Aorta (tissue), 5 donors: ENCODE measurements at regions of chr10 and their contacts with region 1.

Region 1: GRCh38 chr10:77391605-77392235 is 245.9 kb downstream of the KCNMA1 start:
- DNase-seq: peak; percentile 91 to 94
- ATAC-seq: peak; percentile 75
- H3K4me3 ChIP-seq: no peak overlapping the region
- H3K27ac ChIP-seq: peak overlapping the region; percentile 94 to 100
- H3K4me1 ChIP-seq: peaks cover 7 to 31% of the 10 kb centered on the region in 2 donors
- H3K27me3 ChIP-seq: no peaks in the 10 kb centered on the region

Region 2: GRCh38 chr10:77004917-77005564 is 386.7 kb before region 1 on chr10:
- intact Hi-C with region 1: no loop called
- DNase-seq: no peak
- ATAC-seq: peak; percentile 88
- H3K4me3 ChIP-seq: no peak overlapping the region
- H3K27ac ChIP-seq: no peak overlapping the region
- H3K4me1 ChIP-seq: no peaks in the 10 kb centered on the region
- H3K27me3 ChIP-seq: no peaks in the 10 kb centered on the region

Region 3: DNA sequence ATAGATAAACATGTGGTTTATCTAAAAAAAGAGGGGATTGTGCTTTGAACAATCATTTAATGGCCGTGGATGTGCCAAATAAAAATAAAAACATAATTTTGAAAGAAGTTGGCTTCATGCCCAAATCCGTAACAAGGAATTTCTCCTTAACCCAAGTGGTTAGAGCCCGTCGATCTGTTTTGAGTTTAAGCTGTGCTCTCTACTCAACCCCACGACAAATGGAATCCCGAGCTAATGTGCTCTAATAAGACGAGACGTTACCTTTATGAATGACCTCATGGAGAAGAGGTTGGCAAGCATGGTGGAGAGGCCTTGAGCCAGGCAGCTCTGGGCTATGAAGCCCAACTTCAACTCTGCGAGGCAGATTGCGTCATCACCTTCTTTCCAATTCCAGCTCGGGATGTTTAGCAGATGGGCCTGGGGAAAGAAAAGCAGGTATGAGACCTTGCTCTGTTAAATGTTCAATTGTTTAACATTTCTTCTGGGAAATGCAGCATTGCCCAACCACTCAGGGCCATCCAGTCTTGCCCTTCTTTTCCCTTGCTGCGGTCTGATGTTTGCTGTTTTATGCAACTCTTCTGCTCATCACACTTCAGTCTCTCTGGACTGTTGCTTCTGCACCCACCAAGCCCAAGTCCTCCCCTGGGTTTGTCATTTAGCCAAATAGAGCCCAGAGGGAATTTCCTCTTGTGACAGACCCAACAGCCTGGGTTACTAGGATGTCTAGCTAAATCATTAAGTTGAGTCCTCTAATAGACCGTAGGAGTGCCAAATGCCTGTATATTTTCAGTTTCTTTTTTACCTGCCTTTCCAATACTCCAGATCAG is 318.7 kb before region 1 on chr10:
- intact Hi-C with region 1: no loop called
- DNase-seq: peak in 1 of 2 donors; percentile 61
- ATAC-seq: peak; percentile 37
- H3K4me3 ChIP-seq: no peak overlapping the region
- H3K27ac ChIP-seq: no peak overlapping the region
- H3K4me1 ChIP-seq: peaks cover 0 to 6% of the 10 kb centered on the region in 2 donors
- H3K27me3 ChIP-seq: no peaks in the 10 kb centered on the region

Region 4: GRCh38 chr10:77179015-77179695 is 212.6 kb before region 1 on chr10:
- intact Hi-C with region 1: loop called (anchors 5 kb)
- DNase-seq: peak; percentile 75 to 79
- ATAC-seq: peak; percentile 61
- H3K4me3 ChIP-seq: no peak overlapping the region
- H3K27ac ChIP-seq: peak overlapping the region in 1 of 2 donors; percentile 62
- H3K4me1 ChIP-seq: peaks cover 9 to 12% of the 10 kb centered on the region in 2 donors
- H3K27me3 ChIP-seq: no peaks in the 10 kb centered on the region

Region 5: DNA sequence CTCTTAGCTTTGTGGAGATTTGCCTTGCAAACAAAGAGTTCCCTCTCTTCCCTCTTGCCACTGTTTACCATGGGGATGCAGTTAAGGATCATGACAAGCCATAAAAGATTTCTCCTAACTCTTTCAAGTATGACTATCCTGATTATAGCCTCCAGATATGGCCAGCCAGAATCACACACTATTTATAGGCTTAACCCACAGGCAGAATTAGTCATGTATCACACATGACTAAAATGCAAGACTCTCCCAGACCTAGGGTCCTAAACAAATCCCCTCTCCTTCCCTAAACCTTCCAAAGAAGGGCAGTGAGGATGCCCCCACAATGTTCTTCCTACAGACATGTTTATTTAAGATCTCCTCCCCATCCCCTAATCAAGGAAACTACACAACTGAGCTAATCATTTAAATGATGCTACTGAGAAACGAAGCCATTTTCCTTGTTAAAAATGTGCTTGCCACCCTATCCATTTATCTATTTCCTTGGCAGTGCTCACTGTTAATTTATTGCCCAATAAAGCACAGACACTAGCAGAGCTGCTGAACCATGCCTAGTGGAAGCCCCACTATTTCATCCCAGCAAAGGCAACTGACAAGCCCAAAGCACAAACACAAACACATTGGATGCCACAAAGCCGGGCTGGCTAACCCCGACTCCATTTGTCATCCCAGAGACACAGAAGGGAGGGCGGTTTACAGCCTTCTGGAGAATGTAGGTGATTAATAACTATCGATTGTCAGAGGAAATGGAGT is 117.5 kb before region 1 on chr10:
- intact Hi-C with region 1: loop called in 1 of 2 experiments (anchors 5 kb)
- DNase-seq: no peak
- ATAC-seq: no peak
- H3K4me3 ChIP-seq: no peak overlapping the region
- H3K27ac ChIP-seq: no peak overlapping the region
- H3K4me1 ChIP-seq: peaks cover 0 to 5% of the 10 kb centered on the region in 2 donors
- H3K27me3 ChIP-seq: no peaks in the 10 kb centered on the region

Region 6: DNA sequence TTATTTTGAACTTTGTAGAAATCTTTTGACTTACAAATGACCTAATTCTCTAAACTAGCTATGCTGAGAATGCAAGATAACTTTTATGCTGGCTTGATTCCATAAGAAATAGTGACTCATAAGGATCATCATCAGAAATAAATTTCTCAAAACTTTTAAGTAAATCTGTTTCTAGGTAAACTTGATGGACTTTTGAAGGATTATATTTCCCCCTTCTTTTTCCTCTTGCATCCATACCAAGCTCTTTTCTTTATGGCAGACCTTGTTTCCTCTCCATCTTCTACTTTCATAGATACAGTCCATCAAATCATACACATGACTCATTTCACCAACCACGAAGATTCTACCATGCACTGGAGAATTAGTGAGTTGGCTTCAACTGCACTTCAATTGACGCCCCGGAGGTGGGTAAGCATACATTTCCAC is 90.4 kb before region 1 on chr10:
- intact Hi-C with region 1: loop called in 1 of 2 experiments (anchors 5 kb)
- DNase-seq: no peak
- ATAC-seq: no peak
- H3K4me3 ChIP-seq: no peak overlapping the region
- H3K27ac ChIP-seq: peak overlapping the region in 1 of 2 donors; percentile 18
- H3K4me1 ChIP-seq: peaks cover 4% of the 10 kb centered on the region in 2 donors
- H3K27me3 ChIP-seq: no peaks in the 10 kb centered on the region

Region 7: GRCh38 chr10:77350711-77351119 is 41.0 kb before region 1 on chr10:
- intact Hi-C with region 1: loop called in 1 of 2 experiments (anchors 2 kb)
- DNase-seq: peak; percentile 83 to 91
- ATAC-seq: peak; percentile 86
- H3K4me3 ChIP-seq: no peak overlapping the region
- H3K27ac ChIP-seq: no peak overlapping the region
- H3K4me1 ChIP-seq: peaks cover 4 to 7% of the 10 kb centered on the region in 2 donors
- H3K27me3 ChIP-seq: no peaks in the 10 kb centered on the region

Region 8: GRCh38 chr10:77416311-77417135 is 24.8 kb after region 1 on chr10:
- intact Hi-C with region 1: loop called (anchors 1 to 2 kb)
- DNase-seq: peak in 1 of 2 donors; percentile 76
- ATAC-seq: no peak
- H3K4me3 ChIP-seq: no peak overlapping the region
- H3K27ac ChIP-seq: peak overlapping the region; percentile 96 to 100
- H3K4me1 ChIP-seq: peaks cover 11 to 18% of the 10 kb centered on the region in 2 donors
- H3K27me3 ChIP-seq: no peaks in the 10 kb centered on the region

Region 9: DNA sequence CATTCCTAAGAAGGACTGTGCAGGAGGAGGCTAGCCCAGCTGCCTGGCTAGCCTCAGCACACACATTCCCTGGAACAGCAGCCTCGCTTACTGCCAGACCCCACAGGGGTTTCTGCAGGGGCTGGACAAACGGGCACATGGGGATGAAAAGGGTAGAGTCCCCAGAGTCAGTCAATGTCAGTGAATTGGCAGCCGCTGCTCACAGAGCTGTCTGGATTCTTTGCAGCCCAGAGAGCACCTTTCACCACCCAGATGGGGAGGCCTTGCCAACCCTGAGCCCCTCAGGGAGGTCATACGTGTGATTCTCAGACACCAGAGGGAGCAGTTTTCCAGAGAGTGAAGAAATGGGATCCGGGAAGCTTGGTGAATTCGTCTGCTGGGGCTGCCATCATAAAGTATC is 102.6 kb after region 1 on chr10:
- intact Hi-C with region 1: loop called in 1 of 2 experiments (anchors 5 kb)
- DNase-seq: no peak
- ATAC-seq: no peak
- H3K4me3 ChIP-seq: no peak overlapping the region
- H3K27ac ChIP-seq: no peak overlapping the region
- H3K4me1 ChIP-seq: peaks cover 0 to 6% of the 10 kb centered on the region in 2 donors
- H3K27me3 ChIP-seq: no peaks in the 10 kb centered on the region

Region 10: DNA sequence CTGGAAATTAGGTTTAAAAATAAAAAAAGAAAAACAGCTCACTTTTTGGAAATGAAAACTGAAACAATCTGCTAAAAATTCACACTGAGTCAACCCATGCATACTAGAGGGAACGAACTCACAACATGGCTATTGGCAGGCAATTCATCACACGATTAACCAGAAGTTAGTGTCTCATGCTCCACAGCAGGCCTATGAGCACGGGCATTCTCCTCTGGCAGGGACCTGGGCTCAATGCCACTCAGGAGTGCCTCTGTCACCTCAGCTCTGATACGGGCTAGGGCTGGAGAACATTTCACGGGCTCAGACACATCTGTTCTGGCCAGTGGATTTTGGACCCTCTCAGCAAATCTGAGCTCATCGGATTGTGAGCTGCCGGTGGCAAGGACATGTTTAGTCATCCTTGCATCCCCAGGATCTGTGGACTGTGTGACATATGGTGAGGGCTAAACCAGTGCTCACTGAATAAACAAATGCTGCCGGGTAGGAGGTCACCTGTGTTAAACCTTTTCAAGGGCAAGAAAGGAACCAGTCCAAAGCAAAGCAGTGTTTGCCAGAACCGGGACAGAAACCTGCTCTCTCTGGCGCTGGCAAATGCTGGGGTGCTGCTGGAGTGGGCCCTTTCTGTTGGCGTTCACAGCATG is 597.5 kb after region 1 on chr10:
- intact Hi-C with region 1: no loop called
- DNase-seq: peak; percentile 75 to 85
- ATAC-seq: peak; percentile 73
- H3K4me3 ChIP-seq: no peak overlapping the region
- H3K27ac ChIP-seq: peak overlapping the region; percentile 71 to 98
- H3K4me1 ChIP-seq: peaks cover 5 to 8% of the 10 kb centered on the region in 2 donors
- H3K27me3 ChIP-seq: no peaks in the 10 kb centered on the region